Left ventricle myocardium inferior (tissue), 1 donor: ENCODE measurements at regions of chr1 and their contacts with region 1.

Region 1: GRCh38 chr1:155091071-155091709 is 12.6 kb downstream of the EFNA3 start:
- DNase-seq: peak; percentile 70
- H3K4me3 ChIP-seq: no peak overlapping the region
- H3K27ac ChIP-seq: no peak overlapping the region
- H3K4me1 ChIP-seq: peaks cover 30% of the 10 kb centered on the region
- H3K27me3 ChIP-seq: no peaks in the 10 kb centered on the region
- CTCF ChIP-seq: peak; percentile 99

Region 2: GRCh38 chr1:154635162-154635561 is 456.0 kb before region 1 on chr1:
- intact Hi-C with region 1: no loop called
- DNase-seq: no peak
- H3K4me3 ChIP-seq: no peak overlapping the region
- H3K27ac ChIP-seq: no peak overlapping the region
- H3K4me1 ChIP-seq: no peaks in the 10 kb centered on the region
- H3K27me3 ChIP-seq: peaks cover 25% of the 10 kb centered on the region
- CTCF ChIP-seq: no peak

Region 3: DNA sequence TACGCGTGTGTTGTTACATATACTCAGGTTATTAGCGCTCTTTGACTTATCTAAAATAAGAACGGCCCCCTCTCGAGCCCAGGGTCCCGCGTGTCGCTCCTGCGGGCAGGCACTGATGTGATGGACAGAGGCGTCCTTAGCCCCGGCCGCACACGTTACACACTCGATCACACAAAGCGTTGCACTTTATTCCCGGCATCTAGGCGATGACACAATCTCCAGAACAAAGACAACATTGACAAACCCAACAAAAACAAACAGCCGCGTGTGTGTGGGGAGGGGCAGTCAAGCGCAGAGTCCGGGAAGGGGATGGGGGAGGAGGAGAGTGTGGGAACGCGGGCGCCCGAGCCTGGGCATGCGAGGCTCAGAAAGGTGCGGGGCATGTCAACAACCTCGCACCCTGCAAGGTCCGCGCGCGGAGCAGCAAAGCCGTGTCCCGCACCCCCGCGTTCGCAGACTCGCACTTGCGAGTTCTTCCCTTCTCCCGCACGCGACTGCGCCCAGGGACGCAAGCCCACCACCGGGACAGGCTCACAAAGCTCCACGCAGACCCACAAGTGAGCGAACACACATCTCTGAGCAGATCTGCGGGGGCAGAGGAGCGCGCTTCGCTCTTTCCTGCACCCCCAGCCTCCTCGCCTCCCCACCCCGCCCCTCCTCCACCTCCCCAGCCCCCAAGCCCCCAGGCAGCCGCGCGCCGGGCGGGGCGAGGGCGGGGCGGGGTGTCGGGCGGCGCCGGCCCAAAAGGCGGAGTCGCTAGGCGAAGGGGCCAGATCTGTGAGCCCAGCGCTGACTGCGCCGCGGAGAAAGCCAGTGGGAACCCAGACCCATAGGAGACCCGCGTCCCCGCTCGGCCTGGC is 36.1 kb after region 1 on chr1 and contains the start of gene EFNA1:
- intact Hi-C with region 1: loop called (anchors 5 kb)
- DNase-seq: peak; percentile 75
- H3K4me3 ChIP-seq: peak within 1 kb of the TSS; percentile 87
- H3K27ac ChIP-seq: peak within 1 kb of the TSS; percentile 95
- H3K4me1 ChIP-seq: peaks cover 83% of the 10 kb centered on the region
- H3K27me3 ChIP-seq: no peaks in the 10 kb centered on the region
- CTCF ChIP-seq: no peak
- total RNA-seq, gene EFNA1: 42.9 TPM

Region 4: GRCh38 chr1:155167166-155168104 is 76.2 kb after region 1 on chr1:
- intact Hi-C with region 1: loop called (anchors 5 kb)
- DNase-seq: peak; percentile 90
- H3K4me3 ChIP-seq: peak overlapping the region; percentile 47
- H3K27ac ChIP-seq: peak overlapping the region; percentile 90
- H3K4me1 ChIP-seq: peaks cover 43% of the 10 kb centered on the region
- H3K27me3 ChIP-seq: no peaks in the 10 kb centered on the region
- CTCF ChIP-seq: peak; percentile 86

Region 5: GRCh38 chr1:155946633-155947219 is 855.5 kb after region 1 on chr1:
- intact Hi-C with region 1: no loop called
- DNase-seq: no peak
- H3K4me3 ChIP-seq: no peak overlapping the region
- H3K27ac ChIP-seq: peak overlapping the region; percentile 34
- H3K4me1 ChIP-seq: peaks cover 26% of the 10 kb centered on the region
- H3K27me3 ChIP-seq: no peaks in the 10 kb centered on the region
- CTCF ChIP-seq: no peak